ENCODE measurements at regions of chr7 and their contacts with region 1.

Region 1: DNA sequence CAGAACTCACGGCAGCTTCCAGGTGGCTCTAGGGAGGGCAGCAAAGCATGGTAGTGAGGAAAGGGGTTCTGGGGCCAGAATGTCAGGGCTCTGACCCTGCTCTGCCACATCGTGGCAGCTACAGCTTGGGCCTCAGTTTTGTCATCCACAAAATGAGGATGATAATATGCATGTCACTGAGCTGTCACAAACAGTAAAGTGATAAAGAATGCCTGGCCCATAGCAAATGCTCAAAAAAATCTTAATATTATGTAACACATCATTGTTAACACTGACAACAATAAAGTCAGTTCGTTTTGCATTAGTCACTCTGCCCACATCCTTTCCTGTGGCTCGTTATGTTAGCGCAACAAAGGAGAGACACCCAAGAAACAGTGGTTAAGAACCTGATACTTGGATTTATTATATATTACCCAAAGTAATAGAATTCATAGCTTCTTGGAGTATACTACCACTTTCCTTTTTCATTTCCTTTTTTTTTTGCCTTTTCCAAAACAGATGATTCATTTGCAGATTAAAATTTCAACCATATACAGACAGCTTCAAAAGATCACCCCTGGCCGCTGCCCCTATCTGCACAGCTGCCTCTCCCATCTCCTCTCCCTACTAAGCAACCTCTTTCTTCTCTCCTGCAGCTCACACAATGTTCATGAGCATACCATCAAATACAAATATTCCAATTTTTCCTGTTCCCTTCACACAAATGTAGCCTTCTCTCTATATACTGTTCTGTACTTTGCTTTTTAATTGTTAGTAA is 45.5 kb upstream of the DDC start:
- DNase-seq: peak; percentile 17 to 81 (median 60)
- ATAC-seq: peak; percentile 84
- H3K4me3 ChIP-seq: no peak overlapping the region
- H3K4me3 Mint-ChIP-seq: peak overlapping the region; percentile 21
- H3K27ac ChIP-seq: peak overlapping the region; percentile 39 to 53
- H3K27ac Mint-ChIP-seq: peak overlapping the region; percentile 68
- H3K4me1 ChIP-seq: peaks cover 18% of the 10 kb centered on the region
- H3K4me1 Mint-ChIP-seq: peaks cover 39% of the 10 kb centered on the region
- H3K27me3 ChIP-seq: no peaks in the 10 kb centered on the region
- H3K27me3 Mint-ChIP-seq: no peaks in the 10 kb centered on the region
- CTCF ChIP-seq: no peak

Region 2: GRCh38 chr7:50595491-50596102 is 15.1 kb before region 1 on chr7:
- CTCF ChIA-PET with region 1: interaction called, 13 read pairs
- POLR2A ChIA-PET with region 1: interaction called, 3 read pairs
- intact Hi-C with region 1: loop called in 1 of 2 experiments (anchors 2 kb)
- DNase-seq: peak in 2 of 9 experiments; percentile 36 to 56
- ATAC-seq: no peak
- H3K4me3 ChIP-seq: no peak overlapping the region
- H3K4me3 Mint-ChIP-seq: no peak overlapping the region
- H3K27ac ChIP-seq: no peak overlapping the region
- H3K27ac Mint-ChIP-seq: no peak overlapping the region
- H3K4me1 ChIP-seq: no peaks in the 10 kb centered on the region
- H3K4me1 Mint-ChIP-seq: peaks cover 7% of the 10 kb centered on the region
- H3K27me3 ChIP-seq: no peaks in the 10 kb centered on the region
- H3K27me3 Mint-ChIP-seq: peaks cover 3% of the 10 kb centered on the region
- CTCF ChIP-seq: peak; percentile 30

Region 3: GRCh38 chr7:50653981-50654425 is 43.3 kb after region 1 on chr7:
- CTCF ChIA-PET with region 1: no interaction called
- POLR2A ChIA-PET with region 1: no interaction called
- intact Hi-C with region 1: no loop called
- DNase-seq: peak in 1 of 9 experiments; percentile 4
- ATAC-seq: no peak
- H3K4me3 ChIP-seq: no peak overlapping the region
- H3K4me3 Mint-ChIP-seq: no peak overlapping the region
- H3K27ac ChIP-seq: no peak overlapping the region
- H3K27ac Mint-ChIP-seq: no peak overlapping the region
- H3K4me1 ChIP-seq: no peaks in the 10 kb centered on the region
- H3K4me1 Mint-ChIP-seq: peaks cover 3% of the 10 kb centered on the region
- H3K27me3 ChIP-seq: no peaks in the 10 kb centered on the region
- H3K27me3 Mint-ChIP-seq: no peaks in the 10 kb centered on the region
- CTCF ChIP-seq: no peak

Region 4: DNA sequence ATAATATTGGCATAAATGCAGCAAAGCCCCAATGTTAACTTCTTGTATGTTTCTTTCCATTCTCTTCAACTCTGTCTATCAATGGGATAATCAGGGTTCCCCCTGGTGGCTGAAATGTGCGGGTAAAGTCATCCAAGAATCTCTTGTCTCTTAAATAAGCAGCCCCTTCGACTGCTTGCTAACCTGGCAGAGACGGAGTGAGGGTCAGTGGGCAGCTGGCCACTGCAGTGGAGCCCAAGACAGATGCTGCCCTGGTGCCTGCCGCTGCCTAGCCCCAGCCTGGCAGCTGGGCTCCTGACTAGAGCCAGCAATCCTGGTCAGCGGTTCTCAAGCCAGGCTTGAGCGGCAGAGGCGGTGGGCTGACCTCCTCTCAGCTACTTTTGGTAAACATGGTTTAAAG is 457.1 kb after region 1 on chr7:
- CTCF ChIA-PET with region 1: interaction called, 4 read pairs
- POLR2A ChIA-PET with region 1: no interaction called
- intact Hi-C with region 1: loop called (anchors 2 to 10 kb)
- DNase-seq: peak in 7 of 9 experiments; percentile 9 to 53 (median 43)
- ATAC-seq: no peak
- H3K4me3 ChIP-seq: no peak overlapping the region
- H3K4me3 Mint-ChIP-seq: no peak overlapping the region
- H3K27ac ChIP-seq: no peak overlapping the region
- H3K27ac Mint-ChIP-seq: no peak overlapping the region
- H3K4me1 ChIP-seq: no peaks in the 10 kb centered on the region
- H3K4me1 Mint-ChIP-seq: no peaks in the 10 kb centered on the region
- H3K27me3 ChIP-seq: no peaks in the 10 kb centered on the region
- H3K27me3 Mint-ChIP-seq: no peaks in the 10 kb centered on the region
- CTCF ChIP-seq: peak; percentile 54